PC-3 (cell line): ENCODE measurements at regions of chr2 and their contacts with region 1.

Region 1: DNA sequence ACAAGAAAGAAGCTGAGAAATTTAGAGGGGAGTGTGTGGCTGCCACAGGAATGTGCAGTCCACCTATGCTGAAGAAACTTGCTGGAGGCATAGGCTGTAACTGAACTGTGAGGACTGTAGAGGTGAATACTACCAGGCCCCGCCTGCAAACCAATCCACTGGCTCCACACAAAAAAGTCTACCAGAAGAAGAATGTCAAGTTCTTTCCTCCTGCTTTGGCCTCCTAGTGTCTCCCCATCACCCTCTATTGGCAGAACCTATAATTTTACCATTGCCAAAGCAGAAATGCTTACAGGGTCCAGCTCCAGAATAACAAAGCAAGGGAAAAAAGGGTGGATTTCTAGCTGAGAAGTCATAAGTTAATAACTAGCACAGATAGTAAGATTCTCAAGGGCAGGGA is 5.9 kb upstream of the ATP5MC3 start:
- DNase-seq: peak; percentile 69
- ATAC-seq: peak; percentile 85
- H3K4me3 ChIP-seq: no peak overlapping the region
- H3K27ac ChIP-seq: no peak overlapping the region
- H3K4me1 ChIP-seq: no peaks in the 10 kb centered on the region
- H3K27me3 ChIP-seq: no peaks in the 10 kb centered on the region
- CTCF ChIP-seq: peak; percentile 74

Region 2: DNA sequence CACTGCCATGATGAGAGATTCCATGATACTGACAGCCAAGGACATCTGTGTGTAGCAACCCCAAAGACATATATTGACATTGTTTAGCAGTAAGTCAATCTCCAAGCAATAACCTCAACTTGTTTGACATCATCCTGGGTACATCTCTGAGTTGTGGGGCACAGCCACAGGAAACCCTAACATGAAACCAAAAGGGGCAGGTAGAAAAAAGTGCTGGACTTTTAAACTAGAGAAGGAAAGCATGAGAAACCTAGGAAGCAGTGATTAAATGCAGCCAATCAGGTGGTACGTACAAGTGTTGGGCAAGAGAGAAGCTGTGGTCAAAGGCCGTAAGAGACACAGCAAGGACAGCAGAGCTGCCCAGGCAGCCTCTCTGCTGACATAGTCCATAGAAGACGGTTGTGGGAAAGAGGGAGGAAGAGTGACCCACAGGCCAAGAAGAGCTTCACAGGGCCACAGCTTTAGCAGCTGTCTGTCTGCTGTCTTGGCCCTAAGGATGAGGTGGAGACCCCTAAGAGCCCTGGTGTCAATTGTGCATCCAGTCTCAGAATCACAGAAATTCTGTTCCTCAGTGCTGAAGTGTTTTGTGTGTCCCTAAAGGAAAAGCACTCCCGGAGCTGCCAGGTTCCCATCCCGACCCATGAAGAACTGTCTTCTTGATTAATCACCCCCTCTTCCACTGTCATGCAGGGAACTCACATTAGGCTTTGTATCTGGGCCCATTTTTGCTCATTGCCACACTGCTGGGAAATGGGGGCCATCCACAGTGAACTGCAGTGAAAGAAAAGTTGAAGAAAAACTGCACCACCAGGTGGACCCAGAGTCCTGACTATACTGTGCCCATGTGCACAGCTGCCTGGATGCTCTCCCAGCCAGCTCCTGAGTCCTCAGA is 156.8 kb before region 1 on chr2:
- CTCF ChIA-PET with region 1: no interaction called
- POLR2A ChIA-PET with region 1: interaction called, 3 read pairs
- intact Hi-C with region 1: loop called (anchors 1 kb)
- DNase-seq: peak; percentile 69
- ATAC-seq: peak; percentile 97
- H3K4me3 ChIP-seq: no peak overlapping the region
- H3K27ac ChIP-seq: no peak overlapping the region
- H3K4me1 ChIP-seq: peaks cover 7% of the 10 kb centered on the region; the same call in 1 of the 2 replicates
- H3K27me3 ChIP-seq: no peaks in the 10 kb centered on the region
- CTCF ChIP-seq: peak; percentile 66

Region 3: GRCh38 chr2:175036582-175037018 is 150.8 kb before region 1 on chr2:
- CTCF ChIA-PET with region 1: no interaction called
- POLR2A ChIA-PET with region 1: interaction called, 3 read pairs
- intact Hi-C with region 1: loop called (anchors 1 kb)
- DNase-seq: peak; percentile 58
- ATAC-seq: peak; percentile 49; the same call in 1 of the 2 replicates
- H3K4me3 ChIP-seq: no peak overlapping the region
- H3K27ac ChIP-seq: no peak overlapping the region
- H3K4me1 ChIP-seq: no peaks in the 10 kb centered on the region
- H3K27me3 ChIP-seq: no peaks in the 10 kb centered on the region
- CTCF ChIP-seq: peak; percentile 69

Region 4: GRCh38 chr2:175111200-175111657 is 76.1 kb before region 1 on chr2:
- CTCF ChIA-PET with region 1: no interaction called
- POLR2A ChIA-PET with region 1: no interaction called
- intact Hi-C with region 1: loop called (anchors 1 kb)
- DNase-seq: peak; percentile 75
- ATAC-seq: peak; percentile 81
- H3K4me3 ChIP-seq: no peak overlapping the region
- H3K27ac ChIP-seq: no peak overlapping the region
- H3K4me1 ChIP-seq: no peaks in the 10 kb centered on the region
- H3K27me3 ChIP-seq: no peaks in the 10 kb centered on the region
- CTCF ChIP-seq: peak; percentile 86